HAP-1 (cell line): ENCODE measurements at regions of chr11 and their contacts with region 1.

Region 1: GRCh38 chr11:60121264-60121663 is 32.8 kb downstream of the MS4A2 start:
- DNase-seq: peak; percentile 85 to 87
- H3K4me3 ChIP-seq: no peak overlapping the region
- H3K4me1 ChIP-seq: peaks cover 94% of the 10 kb centered on the region
- H3K27me3 ChIP-seq: no peaks in the 10 kb centered on the region

Region 2: GRCh38 chr11:59550368-59550841 is 570.9 kb before region 1 on chr11:
- in situ Hi-C with region 1: loop called (anchors 25 kb)
- DNase-seq: peak; percentile 95 to 96
- H3K4me3 ChIP-seq: peak overlapping the region; percentile 44
- H3K4me1 ChIP-seq: peaks cover 20% of the 10 kb centered on the region
- H3K27me3 ChIP-seq: no peaks in the 10 kb centered on the region

Region 3: DNA sequence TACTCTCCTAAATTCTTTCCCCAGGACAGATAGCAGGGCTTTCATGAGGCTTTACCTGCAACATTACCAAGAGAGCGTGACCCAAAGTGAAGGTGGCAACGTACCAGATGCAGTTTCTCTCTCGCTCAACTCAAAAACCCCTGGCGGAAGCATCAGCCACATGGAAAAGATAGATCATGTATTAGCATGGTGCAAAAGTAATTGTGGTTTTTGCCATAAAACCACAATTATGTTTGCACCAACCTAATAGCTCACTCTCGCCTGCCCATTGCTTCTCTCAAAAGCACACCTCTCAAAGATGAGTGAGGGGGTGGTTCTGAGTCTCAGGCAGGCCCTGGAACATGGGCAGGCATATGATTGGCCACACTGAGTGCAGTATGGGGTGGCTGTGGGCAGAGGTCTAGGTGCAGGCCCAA is 54.6 kb after region 1 on chr11:
- in situ Hi-C with region 1: no loop called
- DNase-seq: no peak
- H3K4me3 ChIP-seq: no peak overlapping the region
- H3K4me1 ChIP-seq: no peaks in the 10 kb centered on the region
- H3K27me3 ChIP-seq: no peaks in the 10 kb centered on the region

Region 4: DNA sequence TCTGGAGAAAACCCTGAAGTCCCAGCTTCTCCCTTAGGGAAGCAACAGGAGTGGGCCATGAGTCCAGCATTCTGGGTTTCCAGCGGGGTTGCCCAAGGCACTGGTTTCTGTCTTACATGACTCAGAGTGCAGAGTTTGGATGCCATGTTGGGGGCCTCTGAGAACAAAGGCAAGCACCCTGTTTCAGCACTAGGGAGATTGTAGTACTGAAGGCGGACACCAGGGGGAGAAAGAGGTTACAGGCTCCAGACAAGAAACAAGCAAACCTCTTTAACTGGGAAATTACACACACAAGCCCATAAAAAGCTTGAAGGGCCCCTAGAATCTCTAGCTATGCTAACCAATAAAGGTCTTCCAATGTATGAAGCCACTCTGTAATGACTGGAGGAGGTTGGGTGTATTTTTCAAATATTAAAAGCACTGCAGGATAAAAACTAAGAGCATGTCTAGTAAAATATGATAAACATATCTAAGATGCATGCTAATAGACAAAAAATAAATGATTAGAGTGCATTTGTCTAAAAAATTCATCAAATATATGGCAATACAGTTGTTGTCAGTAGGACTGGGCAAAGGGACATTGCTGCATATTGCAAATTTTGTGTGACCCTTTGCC is 212.8 kb after region 1 on chr11:
- in situ Hi-C with region 1: no loop called
- DNase-seq: peak; percentile 55 to 88
- H3K4me3 ChIP-seq: no peak overlapping the region
- H3K4me1 ChIP-seq: no peaks in the 10 kb centered on the region
- H3K27me3 ChIP-seq: no peaks in the 10 kb centered on the region

Region 5: GRCh38 chr11:60906132-60906972 is 785.1 kb after region 1 on chr11 and contains the start of gene PRPF19:
- in situ Hi-C with region 1: loop called (anchors 25 kb)
- DNase-seq: peak; percentile 95 to 98
- H3K4me3 ChIP-seq: peak within 1 kb of the TSS; percentile 89
- H3K4me1 ChIP-seq: peaks cover 2% of the 10 kb centered on the region; the same call in 1 of the 2 replicates
- H3K27me3 ChIP-seq: peaks cover 14% of the 10 kb centered on the region